ENCODE measurements at regions of chr17 and their contacts with region 1.

Region 1: GRCh38 chr17:17890773-17891759 is 54.3 kb upstream of the SREBF1 start:
- DNase-seq: peak; percentile 36

Region 2: GRCh38 chr17:17739388-17740066 is 151.5 kb before region 1 on chr17:
- in situ Hi-C with region 1: no loop called
- DNase-seq: no peak

Region 3: DNA sequence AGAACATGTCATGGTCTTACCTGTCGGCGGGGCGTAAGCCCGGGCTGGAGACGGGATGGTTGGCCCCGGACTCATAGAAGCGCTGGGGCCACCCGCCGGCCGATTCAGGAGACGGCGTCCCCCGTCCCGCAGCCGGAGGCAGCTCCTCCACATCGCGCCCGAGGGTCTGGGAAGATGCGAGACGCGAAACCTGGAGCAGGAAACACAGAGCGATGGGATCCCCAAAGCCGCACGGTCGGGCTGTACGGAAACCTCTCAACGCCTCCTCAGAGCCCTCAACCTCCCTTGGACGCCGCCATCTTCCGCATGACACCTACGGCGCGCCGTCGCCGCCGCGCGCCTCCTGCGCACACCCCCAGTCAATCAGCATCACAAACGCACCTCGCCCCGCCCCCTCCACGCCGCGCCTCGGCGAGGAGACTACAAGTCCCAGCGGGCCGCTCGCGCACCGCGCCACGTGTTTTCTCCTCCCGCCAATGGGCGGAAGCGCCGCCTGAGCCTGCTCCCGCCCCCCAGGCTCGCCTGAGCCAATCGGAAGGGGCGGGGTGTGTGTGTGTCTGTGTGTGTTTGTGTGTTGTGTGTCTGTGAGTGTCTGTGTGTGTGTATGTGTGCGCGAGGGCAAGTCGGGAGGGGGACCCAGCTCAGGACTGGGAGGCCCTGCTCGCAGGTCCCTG is 147.9 kb after region 1 on chr17 and contains the starts of genes ATPAF2 and GID4:
- in situ Hi-C with region 1: loop called (anchors 25 kb)
- DNase-seq: peak; percentile 99
- total RNA-seq, gene ATPAF2: 78.5 and 84.5 TPM in 2 replicates
- total RNA-seq, gene GID4: 6.7 and 10.8 TPM in 2 replicates

Measured in G401 (cell line).